ENCODE measurements at regions of chr19 and their contacts with region 1.

Region 1: GRCh38 chr19:29576761-29577648 is 29.1 kb upstream of the POP4 start:
- H3K4me3 ChIP-seq: no peak overlapping the region
- H3K27ac ChIP-seq: no peak overlapping the region
- H3K4me1 ChIP-seq: peaks cover 25% of the 10 kb centered on the region
- CTCF ChIP-seq: no peak

Region 2: GRCh38 chr19:29429021-29429420 is 148.0 kb before region 1 on chr19:
- CTCF ChIA-PET with region 1: no interaction called
- POLR2A ChIA-PET with region 1: no interaction called
- H3K4me3 ChIP-seq: no peak overlapping the region
- H3K27ac ChIP-seq: no peak overlapping the region
- H3K4me1 ChIP-seq: no peaks in the 10 kb centered on the region
- CTCF ChIP-seq: no peak

Region 3: GRCh38 chr19:29596885-29597525 is 20.0 kb after region 1 on chr19:
- CTCF ChIA-PET with region 1: interaction called, 10 read pairs
- POLR2A ChIA-PET with region 1: no interaction called
- H3K4me3 ChIP-seq: no peak overlapping the region
- H3K27ac ChIP-seq: peak overlapping the region; percentile 37; the same call in 1 of the 2 replicates
- H3K4me1 ChIP-seq: peaks cover 21% of the 10 kb centered on the region
- CTCF ChIP-seq: peak; percentile 87